Prostate gland (tissue), 2 donors: ENCODE measurements at regions of chr17 and their contacts with region 1.

Region 1: DNA sequence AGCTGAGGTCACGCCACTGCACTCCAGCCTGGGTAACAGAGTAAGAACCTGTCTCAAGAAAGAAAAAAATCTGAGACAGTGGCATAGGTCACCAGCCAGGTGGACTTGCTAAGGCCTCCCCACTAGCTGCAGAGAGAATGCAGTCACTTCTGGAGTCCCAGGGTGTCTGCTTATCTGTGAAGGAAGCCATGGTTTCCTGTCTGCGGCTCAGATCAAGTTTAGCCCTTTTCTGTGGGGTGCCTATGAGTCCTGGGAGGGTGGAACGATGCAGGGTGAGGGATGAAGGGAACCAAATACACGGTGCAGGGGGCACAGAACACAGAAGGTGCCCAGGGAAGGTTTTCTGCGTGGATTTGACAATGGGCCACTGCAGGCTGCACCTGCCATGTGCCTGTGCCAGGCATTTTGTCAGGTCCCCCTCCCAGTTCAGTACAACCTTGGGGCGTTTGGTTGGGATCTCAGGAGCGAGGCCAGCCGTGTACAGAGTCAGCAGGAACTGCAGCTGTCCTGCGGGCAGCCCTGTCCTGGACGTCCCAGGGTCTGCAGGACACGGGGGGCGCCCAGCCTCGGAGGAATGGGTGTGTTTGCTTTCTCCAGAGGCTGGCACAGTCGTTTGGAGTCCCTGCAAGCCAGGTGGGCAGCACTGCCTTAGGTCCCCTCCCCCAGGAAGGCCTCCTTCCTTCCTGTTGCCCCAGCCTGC is 41.8 kb downstream of the RAB11FIP4 start:
- DNase-seq: no peak
- H3K4me3 ChIP-seq: no peak overlapping the region
- H3K27ac ChIP-seq: no peak overlapping the region
- H3K4me1 ChIP-seq: no peaks in the 10 kb centered on the region
- H3K27me3 ChIP-seq: no peaks in the 10 kb centered on the region
- CTCF ChIP-seq: no peak
- POLR2A ChIP-seq: no peak

Region 2: GRCh38 chr17:31008374-31009041 is 424.7 kb before region 1 on chr17:
- intact Hi-C with region 1: no loop called
- DNase-seq: peak; percentile 71
- H3K4me3 ChIP-seq: peak overlapping the region; percentile 59 to 61
- H3K27ac ChIP-seq: peak overlapping the region; percentile 87 to 90
- H3K4me1 ChIP-seq: peaks cover 3% of the 10 kb centered on the region
- H3K27me3 ChIP-seq: no peaks in the 10 kb centered on the region
- CTCF ChIP-seq: peak in 1 of 4 experiments; percentile 4
- POLR2A ChIP-seq: peak; percentile 30

Region 3: GRCh38 chr17:31487648-31488263 is 54.5 kb after region 1 on chr17:
- intact Hi-C with region 1: no loop called
- DNase-seq: peak; percentile 95
- H3K4me3 ChIP-seq: peak overlapping the region; percentile 49 to 62
- H3K27ac ChIP-seq: peak overlapping the region; percentile 78 to 85
- H3K4me1 ChIP-seq: no peaks in the 10 kb centered on the region
- H3K27me3 ChIP-seq: no peaks in the 10 kb centered on the region
- CTCF ChIP-seq: no peak
- POLR2A ChIP-seq: peak; percentile 91

Region 4: DNA sequence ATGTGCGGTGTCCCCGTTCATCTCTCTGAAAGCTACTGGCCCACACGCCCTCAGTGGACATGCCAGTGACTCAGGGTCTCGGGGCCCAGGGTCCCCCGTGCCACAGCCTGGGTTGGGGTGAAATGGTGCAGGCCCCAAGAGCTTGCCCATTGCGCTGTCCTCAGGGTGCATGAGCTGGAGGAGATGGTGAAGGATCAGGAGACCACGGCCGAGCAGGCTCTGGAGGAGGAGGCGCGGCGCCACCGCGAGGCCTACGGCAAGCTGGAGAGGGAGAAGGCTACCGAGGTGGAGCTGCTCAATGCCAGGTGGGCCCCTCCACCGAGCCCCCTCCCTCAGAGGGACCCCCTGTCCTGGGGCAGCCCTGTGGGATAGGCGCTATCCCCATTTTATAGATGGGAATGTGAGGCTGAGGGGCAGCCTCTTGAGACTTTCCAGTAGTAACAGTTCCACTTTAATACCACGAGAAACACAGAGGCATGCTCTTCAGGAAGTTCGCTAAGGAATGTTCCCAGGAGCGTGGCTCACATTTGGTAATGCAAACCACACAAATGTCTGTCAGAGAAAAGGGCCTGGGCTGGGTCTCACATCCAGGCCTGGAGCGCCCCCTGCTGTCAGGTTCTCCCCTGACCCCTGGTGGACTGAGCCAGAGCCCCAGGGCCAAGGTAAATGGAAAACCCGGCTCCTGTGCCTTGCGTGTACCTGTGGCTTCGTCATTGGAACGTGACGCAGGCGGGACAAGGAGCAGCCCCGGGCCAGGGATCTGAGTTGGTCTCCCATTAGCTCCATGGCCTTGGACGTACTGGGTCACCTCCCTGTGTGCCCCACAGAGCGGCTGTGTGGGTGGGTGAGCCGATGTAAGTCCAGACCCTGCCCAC is 91.9 kb after region 1 on chr17:
- intact Hi-C with region 1: loop called (anchors 5 kb)
- DNase-seq: peak; percentile 87
- H3K4me3 ChIP-seq: no peak overlapping the region
- H3K27ac ChIP-seq: no peak overlapping the region
- H3K4me1 ChIP-seq: no peaks in the 10 kb centered on the region
- H3K27me3 ChIP-seq: no peaks in the 10 kb centered on the region
- CTCF ChIP-seq: peak; percentile 61 to 95 (median 94)
- POLR2A ChIP-seq: no peak

Region 5: DNA sequence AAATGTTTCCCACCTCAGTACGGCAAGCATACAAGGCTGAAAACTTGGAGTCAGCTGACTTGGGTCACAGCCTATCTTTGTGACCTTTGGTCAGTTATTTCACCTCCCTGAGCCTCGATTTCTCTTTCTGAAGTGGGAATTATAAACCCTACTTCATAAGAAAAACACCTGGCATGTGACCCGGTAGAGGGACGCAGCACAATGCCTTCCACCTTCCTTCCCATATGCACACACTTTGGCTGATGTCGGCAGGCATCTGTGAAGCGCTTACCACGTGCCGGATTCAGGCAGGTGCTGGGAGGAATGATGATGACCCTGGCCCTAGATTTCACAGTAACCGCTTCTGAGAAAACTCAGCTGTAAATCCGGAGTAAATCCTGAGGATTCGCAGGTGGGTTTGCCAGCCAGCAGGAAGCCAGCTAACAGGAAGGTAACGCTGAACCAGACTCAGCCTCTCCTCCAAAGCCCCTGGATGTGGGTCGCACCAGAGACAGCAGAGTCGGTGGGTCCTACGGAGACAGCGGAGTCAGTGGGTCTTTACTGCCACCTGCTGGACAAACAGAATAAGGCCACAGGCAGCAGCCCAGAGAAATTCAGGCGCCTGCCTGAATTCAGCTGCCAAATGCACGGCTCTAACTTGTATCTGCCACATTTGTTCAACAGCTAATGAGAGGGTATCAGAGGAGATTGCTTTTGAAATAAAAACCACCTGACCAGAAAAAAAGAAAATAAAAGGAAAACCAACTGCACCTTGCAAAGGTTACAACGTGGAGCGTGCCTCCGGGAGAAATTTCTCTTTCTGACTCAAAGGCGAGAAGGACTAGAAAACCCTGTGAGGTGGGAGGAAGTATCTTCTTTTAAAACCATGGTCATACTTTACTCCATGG is 409.2 kb after region 1 on chr17:
- intact Hi-C with region 1: loop called (anchors 5 kb)
- DNase-seq: peak; percentile 75
- H3K4me3 ChIP-seq: peak overlapping the region in 1 of 2 donors; percentile 10
- H3K27ac ChIP-seq: peak overlapping the region; percentile 65 to 71
- H3K4me1 ChIP-seq: peaks cover 6% of the 10 kb centered on the region
- H3K27me3 ChIP-seq: no peaks in the 10 kb centered on the region
- CTCF ChIP-seq: peak; percentile 95 to 98 (median 96)
- POLR2A ChIP-seq: no peak

Region 6: DNA sequence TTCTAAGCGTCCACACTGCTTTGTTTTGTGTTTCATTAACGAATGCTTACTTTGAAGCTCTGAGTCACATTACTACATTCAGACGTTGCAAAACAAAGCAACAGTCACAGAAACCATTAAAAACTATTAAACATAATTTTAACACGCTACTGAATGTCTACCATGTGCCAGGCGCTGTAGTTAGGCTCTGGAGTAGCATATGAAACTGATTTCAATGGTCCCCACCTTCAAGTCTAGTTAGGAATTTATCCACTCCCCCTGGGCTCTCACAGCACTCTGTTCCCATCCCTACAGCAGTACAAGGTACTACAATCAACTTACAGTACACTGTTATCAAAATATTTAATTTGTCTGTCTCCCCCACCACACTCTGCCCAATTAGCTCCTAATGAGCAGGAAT is 467.6 kb after region 1 on chr17:
- intact Hi-C with region 1: loop called (anchors 2 kb)
- DNase-seq: no peak
- H3K4me3 ChIP-seq: peak overlapping the region; percentile 47 to 69
- H3K27ac ChIP-seq: peak overlapping the region; percentile 67 to 72
- H3K4me1 ChIP-seq: no peaks in the 10 kb centered on the region
- H3K27me3 ChIP-seq: no peaks in the 10 kb centered on the region
- CTCF ChIP-seq: no peak
- POLR2A ChIP-seq: no peak

Region 7: DNA sequence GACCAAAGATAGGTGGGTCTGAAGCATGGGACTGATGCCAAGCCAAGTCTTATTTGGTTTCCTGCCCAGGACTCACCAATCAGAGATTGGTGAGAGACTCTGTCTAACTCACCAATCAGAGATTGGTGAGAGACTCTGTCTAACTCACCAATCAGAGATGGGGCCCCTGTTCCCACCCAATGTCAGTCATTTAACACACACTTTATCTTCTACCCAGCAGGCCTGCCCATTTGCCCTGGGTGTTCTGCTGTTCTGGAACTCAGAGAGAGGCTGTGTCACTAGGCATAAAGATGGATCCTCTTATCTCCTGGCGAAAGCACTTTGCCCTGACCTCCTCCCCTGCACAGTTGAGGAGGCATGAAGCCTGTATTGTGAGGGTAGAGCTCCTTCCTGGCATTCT is 703.6 kb after region 1 on chr17:
- intact Hi-C with region 1: loop called (anchors 10 kb)
- DNase-seq: no peak
- H3K4me3 ChIP-seq: no peak overlapping the region
- H3K27ac ChIP-seq: no peak overlapping the region
- H3K4me1 ChIP-seq: no peaks in the 10 kb centered on the region
- H3K27me3 ChIP-seq: no peaks in the 10 kb centered on the region
- CTCF ChIP-seq: no peak
- POLR2A ChIP-seq: no peak